Endothelial cell of umbilical vein (primary cell): ENCODE measurements at regions of chrX and their contacts with region 1.

Region 1: GRCh38 chrX:69387567-69388487 is 116.3 kb upstream of the NALF2 start:
- DNase-seq: peak; percentile 11
- H3K4me3 ChIP-seq: no peak overlapping the region
- H3K27ac ChIP-seq: no peak overlapping the region
- H3K4me1 ChIP-seq: no peaks in the 10 kb centered on the region
- H3K27me3 ChIP-seq: no peaks in the 10 kb centered on the region
- CTCF ChIP-seq: peak; percentile 23 to 53
- POLR2A ChIP-seq: no peak

Region 2: DNA sequence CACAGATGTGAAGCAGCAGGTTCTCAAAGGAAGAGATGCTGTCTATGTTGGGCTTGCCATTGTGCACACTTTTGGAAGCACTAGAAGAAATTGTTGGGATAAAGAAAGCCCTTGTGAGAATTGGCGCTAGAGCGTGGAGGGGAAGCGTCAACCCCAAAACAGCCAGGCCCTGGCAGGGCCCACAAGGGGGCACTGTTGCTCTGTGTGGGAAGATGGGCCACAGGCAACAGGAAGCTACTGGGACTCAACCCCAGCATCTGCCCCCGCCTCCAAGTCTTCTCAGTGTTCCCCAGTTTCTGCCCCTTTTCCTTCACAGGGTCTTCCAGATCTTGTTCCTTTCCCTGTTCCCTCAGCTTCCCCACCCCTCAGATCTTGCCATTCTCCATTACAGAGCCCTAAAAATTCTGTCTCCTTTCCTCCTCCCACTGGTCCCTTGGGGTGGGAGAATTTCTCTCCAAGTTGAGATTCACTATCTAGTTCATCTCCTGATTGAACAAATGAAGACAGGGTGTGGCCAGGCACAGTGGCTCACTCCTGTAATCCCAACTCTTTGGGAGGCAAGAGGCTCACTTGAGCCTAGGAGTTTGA is 654.8 kb before region 1 on chrX:
- CTCF ChIA-PET with region 1: interaction called, 21 read pairs
- POLR2A ChIA-PET with region 1: no interaction called
- dilution Hi-C with region 1: no loop called
- intact Hi-C with region 1: no loop called
- DNase-seq: peak; percentile 12
- H3K4me3 ChIP-seq: no peak overlapping the region
- H3K27ac ChIP-seq: no peak overlapping the region
- H3K4me1 ChIP-seq: no peaks in the 10 kb centered on the region
- H3K27me3 ChIP-seq: no peaks in the 10 kb centered on the region
- CTCF ChIP-seq: peak; percentile 58 to 69
- POLR2A ChIP-seq: no peak

Region 3: DNA sequence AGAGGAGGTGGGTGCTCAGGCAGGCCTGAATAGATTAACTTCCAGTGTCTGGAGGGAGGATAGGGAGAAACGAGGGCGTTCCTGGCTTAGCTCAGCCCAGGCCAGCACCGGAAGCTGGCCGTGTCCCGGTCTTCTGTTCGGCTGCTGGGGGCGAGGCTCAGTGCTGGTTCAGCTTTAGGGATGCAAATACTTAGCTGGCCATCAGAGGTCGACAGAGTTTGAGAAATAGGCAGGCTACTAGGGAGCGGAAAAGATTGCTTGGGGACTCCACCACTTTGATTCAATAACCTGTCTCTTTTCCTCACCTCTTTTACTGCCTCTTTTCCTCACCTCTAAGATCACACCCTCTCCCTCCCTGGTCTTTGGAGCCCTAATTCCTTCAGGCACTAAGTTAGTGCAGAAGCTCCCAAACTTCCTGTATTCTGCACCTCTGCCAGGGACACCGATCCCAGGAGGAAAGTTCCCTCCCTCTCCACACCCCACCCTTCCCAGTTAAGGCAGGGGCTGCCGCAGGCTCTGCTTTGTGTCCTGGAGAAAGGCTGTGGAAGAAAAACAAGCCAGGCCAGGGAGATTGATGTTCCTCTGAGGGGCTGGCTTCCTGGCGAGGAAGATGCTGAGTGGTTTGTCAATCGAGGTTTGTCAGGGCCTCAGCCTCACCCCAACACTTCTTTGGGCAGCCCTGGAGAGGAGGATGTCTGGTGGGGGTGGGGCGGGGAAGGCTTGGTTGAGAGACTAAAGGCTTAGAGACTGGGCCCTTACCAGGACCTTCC is 565.0 kb before region 1 on chrX:
- CTCF ChIA-PET with region 1: interaction called, 14 read pairs
- POLR2A ChIA-PET with region 1: no interaction called
- dilution Hi-C with region 1: no loop called
- intact Hi-C with region 1: loop called (anchors 5 kb)
- DNase-seq: peak; percentile 28
- H3K4me3 ChIP-seq: no peak overlapping the region
- H3K27ac ChIP-seq: no peak overlapping the region
- H3K4me1 ChIP-seq: no peaks in the 10 kb centered on the region
- H3K27me3 ChIP-seq: peaks cover 0 to 2% of the 10 kb centered on the region in 2 experiments
- CTCF ChIP-seq: peak; percentile 39 to 56
- POLR2A ChIP-seq: no peak

Region 4: GRCh38 chrX:69268611-69269010 is 119.2 kb before region 1 on chrX:
- CTCF ChIA-PET with region 1: no interaction called
- POLR2A ChIA-PET with region 1: no interaction called
- dilution Hi-C with region 1: no loop called
- intact Hi-C with region 1: no loop called
- DNase-seq: no peak
- H3K4me3 ChIP-seq: no peak overlapping the region
- H3K27ac ChIP-seq: no peak overlapping the region
- H3K4me1 ChIP-seq: no peaks in the 10 kb centered on the region
- H3K27me3 ChIP-seq: peaks cover 2 to 3% of the 10 kb centered on the region in 2 experiments
- CTCF ChIP-seq: no peak
- POLR2A ChIP-seq: no peak

Region 5: GRCh38 chrX:69305333-69306062 is 82.3 kb before region 1 on chrX:
- CTCF ChIA-PET with region 1: no interaction called
- POLR2A ChIA-PET with region 1: no interaction called
- dilution Hi-C with region 1: no loop called
- intact Hi-C with region 1: no loop called
- DNase-seq: no peak
- H3K4me3 ChIP-seq: no peak overlapping the region
- H3K27ac ChIP-seq: no peak overlapping the region
- H3K4me1 ChIP-seq: no peaks in the 10 kb centered on the region
- H3K27me3 ChIP-seq: peaks cover 3 to 7% of the 10 kb centered on the region in 2 experiments
- CTCF ChIP-seq: no peak
- POLR2A ChIP-seq: no peak

Region 6: DNA sequence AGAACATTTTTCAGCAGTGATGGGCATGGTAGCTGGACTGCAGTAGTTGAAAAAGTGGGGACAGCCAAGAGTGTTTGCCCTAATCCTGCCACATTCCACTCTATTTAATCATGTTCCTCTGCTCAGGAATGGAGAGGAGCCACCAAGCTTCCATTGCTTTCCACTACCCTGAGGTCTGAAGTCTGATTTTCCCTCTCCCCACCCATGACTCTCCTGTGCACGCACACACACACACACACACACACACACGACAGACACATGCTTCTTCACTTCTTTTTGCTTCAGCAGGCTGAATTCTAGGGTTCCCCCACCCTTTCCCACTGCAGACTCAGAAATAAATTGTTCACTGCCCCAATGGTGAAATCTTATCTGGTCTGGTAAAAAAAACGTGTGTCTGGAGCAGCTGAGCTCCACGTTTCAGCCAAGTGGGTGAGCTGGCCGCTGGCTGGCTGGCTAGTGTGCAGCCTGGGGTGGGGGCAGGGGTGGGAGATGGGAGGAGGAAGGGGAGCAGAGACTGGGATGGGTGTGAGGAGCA is 26.4 kb before region 1 on chrX:
- CTCF ChIA-PET with region 1: no interaction called
- POLR2A ChIA-PET with region 1: no interaction called
- dilution Hi-C with region 1: no loop called
- intact Hi-C with region 1: no loop called
- DNase-seq: no peak
- H3K4me3 ChIP-seq: no peak overlapping the region
- H3K27ac ChIP-seq: no peak overlapping the region
- H3K4me1 ChIP-seq: no peaks in the 10 kb centered on the region
- H3K27me3 ChIP-seq: no peaks in the 10 kb centered on the region
- CTCF ChIP-seq: no peak
- POLR2A ChIP-seq: no peak

Region 7: GRCh38 chrX:69412661-69413060 is 24.8 kb after region 1 on chrX:
- CTCF ChIA-PET with region 1: no interaction called
- POLR2A ChIA-PET with region 1: no interaction called
- dilution Hi-C with region 1: no loop called
- intact Hi-C with region 1: no loop called
- DNase-seq: no peak
- H3K4me3 ChIP-seq: no peak overlapping the region
- H3K27ac ChIP-seq: no peak overlapping the region
- H3K4me1 ChIP-seq: no peaks in the 10 kb centered on the region
- H3K27me3 ChIP-seq: no peaks in the 10 kb centered on the region
- CTCF ChIP-seq: no peak
- POLR2A ChIP-seq: no peak